Right ventricle myocardium inferior (tissue), 1 donor: ENCODE measurements at regions of chr1 and their contacts with region 1.

Region 1: DNA sequence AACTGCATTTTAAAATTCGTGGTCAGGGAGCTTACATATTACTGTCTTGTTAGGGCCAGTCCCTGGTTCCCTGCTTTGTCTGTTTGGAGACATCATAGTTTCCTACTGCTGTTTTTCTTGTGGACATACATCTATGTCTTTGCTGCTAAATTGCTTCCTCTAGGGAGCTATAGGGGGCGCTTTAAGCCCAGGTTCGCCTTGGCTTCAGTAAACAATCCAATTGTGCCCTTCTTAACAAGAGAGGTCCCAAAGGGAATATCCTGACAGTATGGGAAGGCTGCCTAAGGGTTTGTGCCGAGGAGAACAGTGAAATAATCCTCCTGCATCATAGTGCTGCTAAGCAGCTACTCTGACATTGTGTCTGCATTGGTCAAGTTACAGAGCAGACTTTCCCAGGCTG is 112.5 kb downstream of the USH2A start:
- DNase-seq: no peak
- ATAC-seq: no peak

Region 2: GRCh38 chr1:216576234-216576937 is 265.6 kb after region 1 on chr1:
- intact Hi-C with region 1: no loop called
- DNase-seq: no peak
- ATAC-seq: no peak

Region 3: DNA sequence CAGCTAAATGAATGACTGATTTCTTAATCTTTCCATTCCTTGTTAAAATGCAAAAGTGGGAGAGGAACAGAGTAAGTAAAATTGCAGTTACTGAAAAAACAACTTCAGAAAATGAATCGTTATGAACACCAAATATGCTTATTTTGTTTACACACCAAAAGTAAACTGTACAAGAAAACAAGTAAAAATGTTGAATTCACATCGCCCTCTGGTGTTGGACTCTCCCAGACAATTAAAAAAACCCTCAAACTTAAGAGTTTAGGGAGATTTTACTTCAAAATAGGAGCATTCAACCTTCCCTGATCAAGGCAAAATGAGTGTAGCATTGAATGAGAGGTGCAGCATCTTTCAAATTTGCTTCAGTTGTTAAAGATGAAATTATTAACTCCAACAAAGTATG is 431.8 kb after region 1 on chr1:
- intact Hi-C with region 1: loop called (anchors 10 kb)
- DNase-seq: no peak
- ATAC-seq: no peak